Right ventricle myocardium inferior (tissue), 1 donor: ENCODE measurements at regions of chr5 and their contacts with region 1.

Region 1: DNA sequence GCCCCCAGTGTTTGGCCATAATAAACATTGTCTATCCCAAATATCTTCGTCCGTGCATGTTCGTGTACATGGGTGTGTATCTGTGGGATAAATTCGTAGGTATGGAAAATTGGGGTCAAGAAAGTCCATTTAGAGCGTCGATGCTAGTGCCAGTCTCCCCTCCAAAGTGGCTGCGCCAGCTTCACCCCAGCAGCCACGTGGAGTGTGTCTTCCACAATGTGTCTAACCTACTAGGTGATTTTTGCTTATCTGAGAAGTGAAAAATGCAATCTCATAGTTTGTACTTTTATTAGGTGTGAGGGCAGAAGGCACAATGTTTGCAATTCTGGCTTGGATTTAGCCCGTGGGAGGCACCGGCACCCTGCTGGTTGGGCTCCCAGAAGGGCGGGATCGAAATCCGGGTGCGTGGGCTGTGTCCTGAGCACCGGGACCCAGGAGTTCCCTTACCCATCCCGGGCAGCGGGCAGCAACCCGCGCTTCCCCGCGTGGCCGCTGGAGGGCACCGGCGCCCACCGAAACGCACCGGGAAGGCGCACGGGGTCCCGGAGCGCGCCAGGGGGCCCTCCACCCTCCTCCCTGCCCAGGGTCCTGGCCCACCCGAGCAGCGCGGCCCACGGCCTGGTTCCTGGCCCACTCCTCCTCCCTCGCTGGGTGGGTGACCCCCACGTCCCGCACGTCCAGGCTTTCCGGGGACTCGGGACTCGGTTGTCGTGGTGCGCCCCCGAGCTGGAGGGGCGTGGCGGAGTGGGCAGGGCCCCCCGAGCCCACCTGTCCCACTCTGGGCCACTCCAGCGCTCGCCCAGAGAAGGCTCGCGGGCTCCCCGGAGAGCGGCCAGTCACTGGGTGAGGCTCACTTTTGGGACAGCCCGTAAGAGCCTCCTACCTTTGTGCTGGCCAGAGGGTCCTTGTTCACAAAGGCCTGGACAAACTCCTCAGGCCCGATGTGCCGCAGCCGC is 55.4 kb upstream of the RNF130 start:
- DNase-seq: no peak
- ATAC-seq: peak; percentile 60

Region 2: DNA sequence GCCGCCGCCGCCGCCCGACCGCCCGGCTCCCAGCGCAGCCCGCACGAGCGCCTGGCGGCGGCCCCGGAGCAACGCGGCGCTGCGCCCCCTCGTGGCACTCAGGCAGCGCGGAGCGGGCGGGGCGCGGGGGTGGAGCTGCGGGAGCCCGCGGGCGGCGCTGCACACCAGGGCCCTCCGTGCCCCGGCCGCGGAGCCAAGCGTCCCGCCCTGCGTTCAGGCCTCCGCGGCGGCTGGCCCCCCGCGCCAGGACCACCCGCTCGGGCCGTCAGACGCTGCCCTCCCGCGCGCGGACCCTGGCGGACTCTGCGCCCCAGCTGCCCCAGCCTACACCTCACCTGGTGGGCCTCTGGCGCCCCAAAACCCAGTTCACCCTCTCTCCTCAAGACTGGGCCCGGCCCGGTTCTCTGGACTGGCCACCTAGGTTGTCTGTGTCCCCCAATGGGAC is 82.2 kb after region 1 on chr5 and contains the start of gene RASGEF1C:
- intact Hi-C with region 1: loop called (anchors 5 kb)
- DNase-seq: peak; percentile 83
- ATAC-seq: peak; percentile 80
- total RNA-seq, gene RASGEF1C: 0.49 TPM

Region 3: GRCh38 chr5:180328296-180329137 is 201.5 kb after region 1 on chr5:
- intact Hi-C with region 1: loop called (anchors 5 kb)
- DNase-seq: peak; percentile 94
- ATAC-seq: no peak

Region 4: GRCh38 chr5:180470966-180471582 is 344.1 kb after region 1 on chr5:
- intact Hi-C with region 1: loop called (anchors 10 kb)
- DNase-seq: no peak
- ATAC-seq: peak; percentile 71